Posterior vena cava (tissue), 2 donors: ENCODE measurements at regions of chr15 and their contacts with region 1.

Region 1: GRCh38 chr15:31326156-31326732 is 391 bp upstream of the KLF13 start:
- DNase-seq: peak; percentile 100

Region 2: GRCh38 chr15:31215490-31216214 is 110.6 kb before region 1 on chr15:
- intact Hi-C with region 1: loop called (anchors 10 kb)
- DNase-seq: peak; percentile 96

Region 3: DNA sequence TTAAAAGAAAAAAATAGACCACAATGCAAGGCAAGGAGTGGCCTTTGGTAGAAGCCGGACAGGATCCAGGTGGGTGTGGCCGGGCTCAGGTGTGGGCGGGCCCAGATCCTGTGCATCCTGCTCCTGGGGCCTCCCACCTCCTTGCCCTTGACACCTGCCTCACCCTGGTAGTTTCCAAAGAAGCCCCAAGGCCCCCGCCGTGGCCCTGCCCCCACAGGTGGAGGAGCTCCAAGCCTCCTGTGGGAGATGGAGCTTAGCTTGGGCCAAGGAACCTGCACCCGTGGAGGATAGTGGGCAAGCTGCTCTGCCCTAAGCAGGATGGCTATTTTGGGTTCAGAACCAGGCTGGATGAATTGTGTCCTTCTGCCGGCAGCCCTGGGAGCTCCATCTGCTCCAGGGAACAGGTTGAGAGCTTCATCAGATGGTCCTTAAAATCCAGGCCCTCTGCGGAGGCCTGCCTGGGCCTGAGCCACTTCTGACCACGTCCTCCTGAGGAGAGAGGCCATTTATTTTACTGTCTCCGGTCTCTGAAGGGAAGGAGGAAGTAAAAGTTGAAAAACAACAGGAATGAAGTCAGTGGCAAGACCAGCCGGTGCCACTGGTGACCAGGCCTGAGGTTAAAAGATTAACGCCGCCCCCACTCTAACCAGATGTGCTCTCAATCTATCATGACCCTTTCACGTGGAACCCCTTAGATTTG is 53.5 kb before region 1 on chr15:
- intact Hi-C with region 1: no loop called
- DNase-seq: peak; percentile 56

Region 4: GRCh38 chr15:31296646-31297574 is 29.3 kb before region 1 on chr15:
- intact Hi-C with region 1: loop called in 1 of 2 experiments (anchors 1 kb)
- DNase-seq: peak; percentile 84

Region 5: DNA sequence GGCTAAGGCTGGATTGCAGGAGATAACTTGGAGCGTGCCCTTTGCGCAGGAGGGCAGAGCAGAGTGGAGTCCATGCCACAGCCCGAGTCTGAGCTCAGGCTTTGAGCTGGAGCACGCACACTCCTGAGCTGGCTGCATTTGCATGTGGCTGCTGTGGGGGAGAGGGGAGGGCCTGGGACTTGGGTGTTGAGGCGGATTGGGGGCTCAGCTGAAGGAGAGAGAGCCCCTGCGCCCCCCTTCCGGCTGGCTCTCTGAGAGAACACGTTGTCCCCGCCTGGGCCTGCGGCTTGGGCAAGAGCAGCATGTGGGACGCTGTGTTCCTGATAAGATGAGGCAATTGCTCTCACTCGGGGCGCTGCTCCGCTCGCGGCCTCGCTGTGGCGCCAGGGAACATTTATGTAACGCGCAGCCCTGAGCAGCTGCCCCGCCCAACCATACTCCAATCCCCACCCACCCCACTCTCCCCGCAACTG is 39.4 kb after region 1 on chr15:
- intact Hi-C with region 1: loop called in 1 of 2 experiments (anchors 2 kb)
- DNase-seq: peak; percentile 98

Region 6: DNA sequence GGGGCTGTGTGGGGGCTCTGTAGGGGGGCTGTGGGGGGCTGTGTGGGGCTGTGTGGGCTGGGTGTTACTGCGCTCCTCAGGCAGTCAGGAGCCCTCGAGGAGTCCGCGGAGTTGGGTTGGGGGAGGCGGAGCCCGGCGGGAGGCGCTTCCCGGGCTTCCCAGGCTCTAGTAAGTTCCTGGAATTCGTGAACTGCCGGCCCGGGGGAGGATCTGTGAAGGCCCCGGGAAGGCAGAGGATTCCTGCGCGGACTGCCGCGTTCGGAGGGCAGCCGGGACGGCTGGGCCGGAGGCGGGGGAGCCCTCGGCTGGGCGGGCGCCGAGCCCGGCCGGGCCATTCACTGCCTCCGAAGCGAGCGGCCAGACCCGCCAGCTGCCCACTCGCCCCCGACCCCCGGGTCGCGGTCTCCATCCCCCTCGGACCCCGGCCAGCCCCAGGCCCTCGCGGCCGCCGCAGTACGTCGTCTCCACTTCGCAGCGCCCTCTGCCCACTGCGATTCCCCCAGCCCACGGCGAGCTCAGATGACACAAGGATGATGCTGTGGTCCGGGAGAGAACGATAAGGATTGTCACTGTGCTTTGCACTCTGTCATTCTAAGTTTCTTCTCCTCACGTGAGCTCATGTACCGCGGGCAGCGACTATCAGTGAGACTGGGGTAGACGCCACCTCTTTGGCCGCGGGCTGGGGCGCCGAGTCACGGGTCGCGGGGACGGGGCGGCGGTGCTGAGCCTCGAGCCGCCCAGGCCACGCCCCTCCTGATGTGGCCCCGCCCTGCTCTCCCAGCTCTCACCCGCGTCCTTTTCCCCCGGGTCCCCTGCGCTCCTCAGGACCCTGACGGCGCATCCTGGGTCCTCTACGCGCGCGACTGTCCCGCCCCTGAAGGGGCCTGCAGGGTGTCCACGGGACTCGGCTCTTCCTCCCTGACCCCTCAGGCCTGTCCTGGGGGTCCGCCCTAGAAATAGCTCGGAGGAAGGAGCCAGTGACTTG is 65.7 kb after region 1 on chr15:
- intact Hi-C with region 1: loop called in 1 of 2 experiments (anchors 5 kb)
- DNase-seq: peak; percentile 96

Region 7: DNA sequence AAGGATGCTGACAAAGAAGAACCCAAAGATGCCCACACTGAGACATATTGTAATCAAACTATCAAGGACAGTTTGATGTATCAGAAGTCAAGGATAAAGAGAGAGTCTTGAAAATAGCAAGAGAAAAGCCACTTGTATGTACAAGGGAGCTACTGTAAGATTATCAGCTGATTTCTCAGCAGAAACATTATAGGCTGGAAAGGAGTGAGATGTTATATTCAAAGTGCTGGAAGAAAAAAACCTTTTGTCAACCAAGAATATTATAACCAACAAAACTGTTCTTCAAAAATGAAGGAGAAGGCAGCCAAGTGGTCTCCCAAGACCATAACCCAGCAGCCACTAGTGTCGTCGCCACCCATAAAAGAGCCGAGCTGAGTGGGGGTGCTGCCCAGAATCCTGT is 93.6 kb after region 1 on chr15:
- intact Hi-C with region 1: no loop called
- DNase-seq: no peak